ENCODE measurements at regions of chr1 and their contacts with region 1.

Region 1: DNA sequence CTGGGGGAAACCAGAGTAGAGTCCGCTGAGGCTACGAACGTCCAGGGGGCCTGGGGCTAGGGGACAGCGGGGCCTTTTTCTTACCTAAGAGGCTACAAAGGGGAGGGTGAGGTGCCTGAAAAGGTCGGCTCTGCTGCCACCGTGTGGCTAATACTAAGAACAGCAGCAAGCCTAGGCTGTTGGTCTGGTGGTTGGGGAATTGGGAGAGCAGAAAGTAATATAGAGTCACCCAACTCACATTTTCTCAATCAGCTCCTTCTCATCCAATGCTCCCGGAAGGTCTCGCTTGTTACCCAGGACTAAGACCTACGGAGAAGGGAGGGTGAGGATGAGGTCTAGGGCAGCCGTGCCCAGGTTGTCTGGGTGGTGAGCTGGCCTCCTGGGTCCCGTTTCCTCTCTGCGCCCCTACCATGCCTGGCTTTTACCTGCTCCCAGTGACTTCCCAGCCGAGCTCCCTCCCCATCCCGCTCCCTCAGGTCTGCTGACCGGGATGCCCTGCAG is 9.3 kb downstream of the ARL8A start:
- DNase-seq: peak in 8 of 9 experiments; percentile 36 to 74 (median 52)
- ATAC-seq: peak; percentile 93
- H3K4me3 ChIP-seq: no peak overlapping the region
- H3K4me3 Mint-ChIP-seq: no peak overlapping the region
- H3K27ac ChIP-seq: no peak overlapping the region
- H3K27ac Mint-ChIP-seq: no peak overlapping the region
- H3K4me1 ChIP-seq: no peaks in the 10 kb centered on the region
- H3K4me1 Mint-ChIP-seq: peaks cover 10% of the 10 kb centered on the region
- H3K27me3 ChIP-seq: no peaks in the 10 kb centered on the region
- H3K27me3 Mint-ChIP-seq: no peaks in the 10 kb centered on the region
- CTCF ChIP-seq: peak; percentile 90

Region 2: GRCh38 chr1:202009326-202010179 is 125.7 kb before region 1 on chr1:
- CTCF ChIA-PET with region 1: interaction called, 6 read pairs
- POLR2A ChIA-PET with region 1: no interaction called
- intact Hi-C with region 1: loop called (anchors 1 to 2 kb)
- DNase-seq: peak; percentile 24 to 70 (median 61)
- ATAC-seq: peak; percentile 71
- H3K4me3 ChIP-seq: no peak overlapping the region
- H3K4me3 Mint-ChIP-seq: no peak overlapping the region
- H3K27ac ChIP-seq: no peak overlapping the region
- H3K27ac Mint-ChIP-seq: no peak overlapping the region
- H3K4me1 ChIP-seq: no peaks in the 10 kb centered on the region
- H3K4me1 Mint-ChIP-seq: peaks cover 2% of the 10 kb centered on the region
- H3K27me3 ChIP-seq: no peaks in the 10 kb centered on the region
- H3K27me3 Mint-ChIP-seq: no peaks in the 10 kb centered on the region
- CTCF ChIP-seq: peak; percentile 84

Region 3: GRCh38 chr1:202117865-202118371 is 17.4 kb before region 1 on chr1:
- CTCF ChIA-PET with region 1: interaction called, 12 read pairs
- POLR2A ChIA-PET with region 1: no interaction called
- intact Hi-C with region 1: no loop called
- DNase-seq: no peak
- ATAC-seq: no peak
- H3K4me3 ChIP-seq: no peak overlapping the region
- H3K4me3 Mint-ChIP-seq: no peak overlapping the region
- H3K27ac ChIP-seq: no peak overlapping the region
- H3K27ac Mint-ChIP-seq: no peak overlapping the region
- H3K4me1 ChIP-seq: no peaks in the 10 kb centered on the region
- H3K4me1 Mint-ChIP-seq: no peaks in the 10 kb centered on the region
- H3K27me3 ChIP-seq: no peaks in the 10 kb centered on the region
- H3K27me3 Mint-ChIP-seq: peaks cover 2% of the 10 kb centered on the region
- CTCF ChIP-seq: no peak

Measured in CD8-positive, alpha-beta T cell (primary cell).